Breast epithelium (tissue), 4 donors: ENCODE measurements at regions of chr3 and their contacts with region 1.

Region 1: DNA sequence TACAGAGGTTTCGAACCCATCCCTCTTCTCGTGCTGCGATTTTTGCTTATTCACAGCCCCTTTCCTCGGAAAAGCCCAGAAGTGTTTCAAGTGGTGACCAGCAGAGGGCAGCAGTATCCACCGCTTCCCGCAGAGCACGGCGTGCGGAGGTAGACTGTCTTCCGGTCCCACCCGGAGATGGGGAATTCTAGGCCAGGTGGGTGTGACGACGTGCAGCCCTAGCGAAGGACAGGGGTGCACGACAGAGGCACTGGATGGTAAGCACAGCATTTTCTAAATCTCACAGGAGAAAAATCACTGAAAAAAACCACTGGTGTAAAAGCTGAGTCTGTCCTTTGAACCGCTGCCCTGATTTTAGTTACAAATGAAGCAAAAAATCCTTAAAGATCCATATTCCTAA is 7.4 kb upstream of the PSMD6 start:
- DNase-seq: peak; percentile 44 to 59
- H3K4me3 ChIP-seq: peak overlapping the region; percentile 16 to 58 (median 31)
- H3K27ac ChIP-seq: no peak overlapping the region
- H3K4me1 ChIP-seq: no peaks in the 10 kb centered on the region
- H3K27me3 ChIP-seq: peaks cover 0 to 4% of the 10 kb centered on the region in 2 donors
- CTCF ChIP-seq: peak; percentile 97
- POLR2A ChIP-seq: no peak

Region 2: DNA sequence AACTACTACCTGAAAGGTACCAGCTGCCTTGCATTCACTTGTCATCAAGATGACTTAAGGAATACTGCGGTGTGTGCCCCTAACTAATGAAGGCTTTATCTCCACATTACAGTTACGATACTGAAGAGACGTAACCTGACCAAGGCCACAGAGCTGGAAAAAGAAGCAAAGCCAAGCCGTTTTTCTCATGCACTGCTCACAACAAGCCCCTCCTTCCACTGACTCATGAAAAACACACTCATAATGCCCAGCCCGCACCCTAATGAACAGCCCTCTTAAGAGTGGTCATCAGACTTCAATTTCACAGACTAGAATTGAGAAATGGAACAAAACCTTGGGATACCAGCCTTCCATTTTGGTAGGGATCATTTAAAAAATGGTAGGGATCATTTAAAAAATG is 19.1 kb before region 1 on chr3:
- intact Hi-C with region 1: no loop called
- DNase-seq: no peak
- H3K4me3 ChIP-seq: no peak overlapping the region
- H3K27ac ChIP-seq: no peak overlapping the region
- H3K4me1 ChIP-seq: no peaks in the 10 kb centered on the region
- H3K27me3 ChIP-seq: no peaks in the 10 kb centered on the region
- CTCF ChIP-seq: no peak
- POLR2A ChIP-seq: no peak

Region 3: DNA sequence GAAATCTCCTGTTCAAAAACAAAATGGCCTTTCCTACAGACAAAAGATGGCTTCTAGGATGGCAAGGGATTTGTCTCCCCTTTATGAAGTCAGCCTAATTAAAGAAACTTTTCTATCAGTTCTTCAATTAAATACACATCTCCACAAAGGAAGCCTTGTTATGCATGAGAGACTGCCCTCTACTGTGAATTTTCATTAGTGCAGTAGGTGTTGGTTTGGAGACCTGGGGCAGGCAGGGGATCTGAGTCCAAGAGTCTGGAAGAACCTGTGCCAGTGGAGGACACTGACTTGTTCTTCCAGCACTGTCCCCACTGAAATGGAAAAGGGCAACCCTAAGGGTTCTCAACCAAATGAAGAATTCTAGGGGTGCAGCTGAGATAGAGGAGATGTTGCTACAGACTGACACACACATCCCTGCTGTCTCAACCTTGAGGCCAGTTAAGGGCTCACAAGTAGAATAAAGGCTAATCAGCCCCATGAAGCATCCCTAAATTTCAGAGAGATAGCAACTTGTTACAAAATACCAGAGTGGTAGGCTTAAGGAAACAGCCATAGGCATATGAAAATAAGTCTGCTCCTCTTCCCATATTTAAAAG is 368.6 kb after region 1 on chr3:
- intact Hi-C with region 1: loop called (anchors 10 kb)
- DNase-seq: peak in 1 of 2 donors; percentile 55
- H3K4me3 ChIP-seq: no peak overlapping the region
- H3K27ac ChIP-seq: no peak overlapping the region
- H3K4me1 ChIP-seq: no peaks in the 10 kb centered on the region
- H3K27me3 ChIP-seq: no peaks in the 10 kb centered on the region
- CTCF ChIP-seq: peak; percentile 60 to 82 (median 78)
- POLR2A ChIP-seq: no peak

Region 4: DNA sequence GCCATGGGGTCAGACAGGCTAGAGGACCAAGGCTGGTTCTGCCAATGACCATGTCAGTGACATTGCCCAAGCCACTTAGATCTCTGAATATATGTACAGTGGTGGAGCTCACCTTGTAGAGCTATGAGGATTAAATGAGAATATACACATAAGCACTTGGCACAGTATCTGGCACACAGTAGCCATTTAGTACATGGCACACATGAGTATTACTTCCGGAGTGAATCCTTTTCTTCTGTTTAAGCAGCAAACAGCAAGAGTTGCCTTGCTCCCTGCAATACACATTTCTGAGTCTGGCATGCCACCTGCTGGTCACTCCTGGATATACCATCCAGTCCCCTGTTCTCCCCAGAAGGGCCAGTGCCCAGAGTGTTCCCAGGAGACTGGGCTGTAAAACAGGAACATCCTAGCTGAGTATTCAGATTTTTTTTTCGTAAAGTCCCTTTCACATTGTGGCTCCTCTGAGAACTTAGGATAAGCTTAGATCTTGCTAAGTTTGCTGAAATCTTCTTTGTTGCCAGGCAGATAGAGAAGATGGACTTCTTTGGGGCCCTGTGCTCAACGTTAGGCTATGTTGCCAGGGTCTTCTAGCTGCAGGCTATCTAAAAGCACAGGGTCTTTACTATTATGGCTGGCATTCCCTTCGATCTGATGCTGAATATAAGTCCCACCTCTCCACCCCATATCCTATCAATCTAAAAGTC is 453.7 kb after region 1 on chr3:
- intact Hi-C with region 1: loop called (anchors 5 kb)
- DNase-seq: peak; percentile 72 to 80
- H3K4me3 ChIP-seq: no peak overlapping the region
- H3K27ac ChIP-seq: no peak overlapping the region
- H3K4me1 ChIP-seq: no peaks in the 10 kb centered on the region
- H3K27me3 ChIP-seq: no peaks in the 10 kb centered on the region
- CTCF ChIP-seq: peak; percentile 86 to 93 (median 90)
- POLR2A ChIP-seq: no peak